SK-N-SH (cell line): ENCODE measurements at regions of chr4 and their contacts with region 1.

Region 1: GRCh38 chr4:69881173-69881773 is 21.3 kb upstream of the SULT1E1 start:
- DNase-seq: peak; percentile 10
- H3K4me3 ChIP-seq: peak overlapping the region in 1 of 2 experiments; percentile 37; a peak in 1 of 4 replicates
- H3K27ac ChIP-seq: no peak overlapping the region
- H3K4me1 ChIP-seq: no peaks in the 10 kb centered on the region
- H3K27me3 ChIP-seq: no peaks in the 10 kb centered on the region
- CTCF ChIP-seq: peak; percentile 89
- EP300 ChIP-seq: no peak
- RAD21 ChIP-seq: peak; percentile 89

Region 2: GRCh38 chr4:69713593-69713992 is 167.7 kb before region 1 on chr4:
- CTCF ChIA-PET with region 1: no interaction called
- POLR2A ChIA-PET with region 1: no interaction called
- DNase-seq: no peak
- H3K4me3 ChIP-seq: no peak overlapping the region
- H3K27ac ChIP-seq: no peak overlapping the region
- H3K4me1 ChIP-seq: 0 out of 4 replicates have a peak, but pooled peaks cover 0 to 1% of the 10 kb centered on the region in 2 experiments
- H3K27me3 ChIP-seq: no peaks in the 10 kb centered on the region
- CTCF ChIP-seq: no peak
- EP300 ChIP-seq: no peak
- RAD21 ChIP-seq: no peak

Region 3: DNA sequence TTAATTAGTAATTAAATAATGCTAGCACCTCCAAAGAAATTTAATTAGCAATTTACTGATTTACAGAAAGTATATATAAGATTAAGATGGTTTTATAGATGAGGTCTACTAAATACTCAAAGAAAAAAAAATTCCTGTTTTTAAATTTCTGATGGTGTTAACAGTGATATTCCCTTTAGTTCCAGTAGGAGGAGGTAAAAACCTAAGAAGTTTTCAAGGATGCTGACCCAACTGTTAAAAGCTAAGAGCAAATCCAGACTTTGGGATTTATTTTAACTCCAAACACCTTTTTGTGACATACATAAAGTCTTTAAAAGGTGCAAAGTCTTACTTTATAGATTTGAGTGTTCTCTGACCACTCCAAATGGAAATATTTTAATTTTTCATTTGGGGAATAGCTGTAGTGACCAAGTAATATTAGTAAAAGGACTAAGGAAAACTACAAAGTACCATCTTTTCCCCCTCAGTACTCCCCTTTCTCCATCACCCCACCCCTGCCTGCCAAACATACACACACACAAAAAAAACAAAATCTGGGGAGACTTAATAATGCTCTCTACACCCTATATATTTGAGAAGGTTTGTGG is 15.3 kb after region 1 on chr4:
- CTCF ChIA-PET with region 1: interaction called, 13 read pairs
- POLR2A ChIA-PET with region 1: no interaction called
- DNase-seq: no peak
- H3K4me3 ChIP-seq: peak overlapping the region in 1 of 2 experiments; percentile 43; a peak in 1 of 4 replicates
- H3K27ac ChIP-seq: no peak overlapping the region
- H3K4me1 ChIP-seq: no peaks in the 10 kb centered on the region
- H3K27me3 ChIP-seq: no peaks in the 10 kb centered on the region
- CTCF ChIP-seq: peak; percentile 60
- EP300 ChIP-seq: no peak
- RAD21 ChIP-seq: peak; percentile 47; the same call in 1 of the 2 replicates